ENCODE measurements at regions of chr7 and their contacts with region 1.

Region 1: GRCh38 chr7:112398534-112398933 is 51.7 kb upstream of the IFRD1 start:
- DNase-seq: no peak
- ATAC-seq: peak; percentile 88
- H3K4me3 ChIP-seq: no peak overlapping the region
- H3K4me3 Mint-ChIP-seq: peak overlapping the region in 6 of 10 donors; percentile 10 to 55 (median 42)
- H3K27ac ChIP-seq: no peak overlapping the region
- H3K27ac Mint-ChIP-seq: peak overlapping the region in 2 of 9 donors; percentile 47 to 69
- H3K4me1 ChIP-seq: peaks cover 0 to 16% of the 10 kb centered on the region in 2 donors
- H3K4me1 Mint-ChIP-seq: peaks cover 14 to 27% (median 20%) of the 10 kb centered on the region in 7 donors
- H3K27me3 ChIP-seq: no peaks in the 10 kb centered on the region
- H3K27me3 Mint-ChIP-seq: peaks cover 0 to 34% (median 4%) of the 10 kb centered on the region in 5 donors

Region 2: GRCh38 chr7:112206238-112207044 is 192.1 kb before region 1 on chr7 and contains the starts of genes DOCK4 and ZNF277:
- CTCF ChIA-PET with region 1: no interaction called
- POLR2A ChIA-PET with region 1: no interaction called
- intact Hi-C with region 1: loop called in 1 of 2 experiments (anchors 2 kb)
- DNase-seq: peak; percentile 97 to 100 (median 99)
- ATAC-seq: peak; percentile 93
- H3K4me3 ChIP-seq: peak within 1 kb of the TSS; percentile 94
- H3K4me3 Mint-ChIP-seq: peak within 1 kb of the TSS; percentile 93 to 99 (median 96)
- H3K27ac ChIP-seq: peak within 1 kb of the TSS; percentile 71
- H3K27ac Mint-ChIP-seq: peak within 1 kb of the TSS; percentile 60 to 95 (median 85)
- H3K4me1 ChIP-seq: peaks cover 14 to 22% of the 10 kb centered on the region in 2 donors
- H3K4me1 Mint-ChIP-seq: peaks cover 25 to 57% (median 39%) of the 10 kb centered on the region in 7 donors
- H3K27me3 ChIP-seq: peaks cover 15% of the 10 kb centered on the region in 2 donors
- H3K27me3 Mint-ChIP-seq: peaks cover 25 to 36% (median 29%) of the 10 kb centered on the region in 5 donors
- total RNA-seq, gene DOCK4: 0.19 to 3.1 (median 2.4) TPM
- total RNA-seq, gene ZNF277: 19.5 to 38.8 (median 25.9) TPM

Region 3: GRCh38 chr7:112383671-112384417 is 14.7 kb before region 1 on chr7:
- CTCF ChIA-PET with region 1: no interaction called
- POLR2A ChIA-PET with region 1: no interaction called
- intact Hi-C with region 1: loop called in 1 of 2 experiments (anchors 2 kb)
- DNase-seq: no peak
- ATAC-seq: peak; percentile 20
- H3K4me3 ChIP-seq: no peak overlapping the region
- H3K4me3 Mint-ChIP-seq: no peak overlapping the region
- H3K27ac ChIP-seq: no peak overlapping the region
- H3K27ac Mint-ChIP-seq: peak overlapping the region in 2 of 9 donors; percentile 31 to 46
- H3K4me1 ChIP-seq: no peaks in the 10 kb centered on the region
- H3K4me1 Mint-ChIP-seq: peaks cover 0 to 11% (median 7%) of the 10 kb centered on the region in 7 donors
- H3K27me3 ChIP-seq: no peaks in the 10 kb centered on the region
- H3K27me3 Mint-ChIP-seq: peaks cover 3 to 20% (median 6%) of the 10 kb centered on the region in 5 donors

Region 4: GRCh38 chr7:112538726-112539255 is 140.3 kb after region 1 on chr7:
- CTCF ChIA-PET with region 1: no interaction called
- POLR2A ChIA-PET with region 1: no interaction called
- intact Hi-C with region 1: no loop called
- DNase-seq: no peak
- ATAC-seq: no peak
- H3K4me3 ChIP-seq: no peak overlapping the region
- H3K4me3 Mint-ChIP-seq: no peak overlapping the region
- H3K27ac ChIP-seq: no peak overlapping the region
- H3K27ac Mint-ChIP-seq: no peak overlapping the region
- H3K4me1 ChIP-seq: no peaks in the 10 kb centered on the region
- H3K4me1 Mint-ChIP-seq: no peaks in the 10 kb centered on the region
- H3K27me3 ChIP-seq: peaks cover 0 to 4% of the 10 kb centered on the region in 2 donors
- H3K27me3 Mint-ChIP-seq: peaks cover 22 to 43% (median 30%) of the 10 kb centered on the region in 5 donors

Region 5: GRCh38 chr7:112571852-112572607 is 173.5 kb after region 1 on chr7:
- CTCF ChIA-PET with region 1: no interaction called
- POLR2A ChIA-PET with region 1: no interaction called
- intact Hi-C with region 1: no loop called
- DNase-seq: no peak
- ATAC-seq: no peak
- H3K4me3 ChIP-seq: no peak overlapping the region
- H3K4me3 Mint-ChIP-seq: no peak overlapping the region
- H3K27ac ChIP-seq: no peak overlapping the region
- H3K27ac Mint-ChIP-seq: no peak overlapping the region
- H3K4me1 ChIP-seq: no peaks in the 10 kb centered on the region
- H3K4me1 Mint-ChIP-seq: peaks cover 0 to 19% (median 15%) of the 10 kb centered on the region in 7 donors
- H3K27me3 ChIP-seq: no peaks in the 10 kb centered on the region
- H3K27me3 Mint-ChIP-seq: peaks cover 0 to 11% (median 4%) of the 10 kb centered on the region in 5 donors

Region 6: GRCh38 chr7:112995171-112995824 is 596.8 kb after region 1 on chr7:
- CTCF ChIA-PET with region 1: no interaction called
- POLR2A ChIA-PET with region 1: no interaction called
- intact Hi-C with region 1: no loop called
- DNase-seq: no peak
- ATAC-seq: no peak
- H3K4me3 ChIP-seq: no peak overlapping the region
- H3K4me3 Mint-ChIP-seq: no peak overlapping the region
- H3K27ac ChIP-seq: no peak overlapping the region
- H3K27ac Mint-ChIP-seq: no peak overlapping the region
- H3K4me1 ChIP-seq: no peaks in the 10 kb centered on the region
- H3K4me1 Mint-ChIP-seq: no peaks in the 10 kb centered on the region
- H3K27me3 ChIP-seq: no peaks in the 10 kb centered on the region
- H3K27me3 Mint-ChIP-seq: peaks cover 0 to 29% (median 7%) of the 10 kb centered on the region in 5 donors

Region 7: DNA sequence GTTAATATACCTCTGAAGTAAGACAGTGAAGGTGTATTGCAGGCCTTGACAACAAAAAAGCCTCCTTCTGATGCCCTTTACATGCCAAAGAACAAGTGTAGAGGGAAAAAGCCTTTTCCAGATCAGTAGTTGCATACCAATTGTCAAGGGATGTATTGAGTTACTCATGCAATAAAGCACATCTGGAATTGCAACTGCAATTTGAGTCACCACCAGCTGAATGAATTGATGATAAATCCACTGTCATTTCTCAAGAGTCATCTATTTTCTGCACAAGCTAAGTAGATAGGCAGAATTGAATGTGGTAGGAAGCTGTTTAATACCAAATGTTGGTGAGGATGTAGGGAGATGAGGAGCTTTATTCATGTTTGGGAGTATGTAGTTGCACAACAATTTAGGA is 1045.7 kb after region 1 on chr7:
- CTCF ChIA-PET with region 1: no interaction called
- POLR2A ChIA-PET with region 1: no interaction called
- intact Hi-C with region 1: no loop called
- DNase-seq: no peak
- ATAC-seq: no peak
- H3K4me3 ChIP-seq: no peak overlapping the region
- H3K4me3 Mint-ChIP-seq: no peak overlapping the region
- H3K27ac ChIP-seq: no peak overlapping the region
- H3K27ac Mint-ChIP-seq: no peak overlapping the region
- H3K4me1 ChIP-seq: no peaks in the 10 kb centered on the region
- H3K4me1 Mint-ChIP-seq: no peaks in the 10 kb centered on the region
- H3K27me3 ChIP-seq: no peaks in the 10 kb centered on the region
- H3K27me3 Mint-ChIP-seq: peaks cover 0 to 13% (median 6%) of the 10 kb centered on the region in 5 donors

Measured in naive thymus-derived CD4-positive, alpha-beta T cell (primary cell).